Colonic mucosa (tissue), 4 donors: ENCODE measurements at regions of chr2 and their contacts with region 1.

Region 1: DNA sequence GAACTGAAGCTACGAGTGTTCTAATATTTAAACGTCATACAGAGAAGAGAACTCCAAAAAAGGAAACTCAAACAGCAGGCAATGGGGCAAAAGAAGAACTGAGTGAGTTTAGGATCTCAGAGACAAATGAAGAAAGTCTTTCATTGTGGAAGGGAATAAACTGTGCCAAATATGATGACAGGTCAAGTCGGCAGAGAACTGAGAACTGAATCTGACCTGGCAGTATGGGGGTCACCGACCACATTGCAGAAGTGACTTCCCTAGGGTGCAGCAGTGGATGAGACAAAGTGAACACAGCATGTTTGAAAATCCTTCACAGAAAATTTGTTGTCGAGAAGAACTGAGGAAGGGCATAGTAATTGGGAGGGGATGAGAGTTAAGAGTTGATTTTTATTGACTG is 55.9 kb downstream of the TTC21B start:
- DNase-seq: no peak
- H3K4me3 ChIP-seq: no peak overlapping the region
- H3K27ac ChIP-seq: no peak overlapping the region
- H3K4me1 ChIP-seq: peaks cover 3% of the 10 kb centered on the region
- H3K27me3 ChIP-seq: no peaks in the 10 kb centered on the region
- CTCF ChIP-seq: no peak

Region 2: GRCh38 chr2:165938237-165938636 is 40.5 kb after region 1 on chr2:
- intact Hi-C with region 1: loop called (anchors 5 kb)
- DNase-seq: no peak
- H3K4me3 ChIP-seq: no peak overlapping the region
- H3K27ac ChIP-seq: no peak overlapping the region
- H3K4me1 ChIP-seq: no peaks in the 10 kb centered on the region
- H3K27me3 ChIP-seq: no peaks in the 10 kb centered on the region
- CTCF ChIP-seq: no peak